ENCODE measurements at regions of chr12 and their contacts with region 1.

Region 1: DNA sequence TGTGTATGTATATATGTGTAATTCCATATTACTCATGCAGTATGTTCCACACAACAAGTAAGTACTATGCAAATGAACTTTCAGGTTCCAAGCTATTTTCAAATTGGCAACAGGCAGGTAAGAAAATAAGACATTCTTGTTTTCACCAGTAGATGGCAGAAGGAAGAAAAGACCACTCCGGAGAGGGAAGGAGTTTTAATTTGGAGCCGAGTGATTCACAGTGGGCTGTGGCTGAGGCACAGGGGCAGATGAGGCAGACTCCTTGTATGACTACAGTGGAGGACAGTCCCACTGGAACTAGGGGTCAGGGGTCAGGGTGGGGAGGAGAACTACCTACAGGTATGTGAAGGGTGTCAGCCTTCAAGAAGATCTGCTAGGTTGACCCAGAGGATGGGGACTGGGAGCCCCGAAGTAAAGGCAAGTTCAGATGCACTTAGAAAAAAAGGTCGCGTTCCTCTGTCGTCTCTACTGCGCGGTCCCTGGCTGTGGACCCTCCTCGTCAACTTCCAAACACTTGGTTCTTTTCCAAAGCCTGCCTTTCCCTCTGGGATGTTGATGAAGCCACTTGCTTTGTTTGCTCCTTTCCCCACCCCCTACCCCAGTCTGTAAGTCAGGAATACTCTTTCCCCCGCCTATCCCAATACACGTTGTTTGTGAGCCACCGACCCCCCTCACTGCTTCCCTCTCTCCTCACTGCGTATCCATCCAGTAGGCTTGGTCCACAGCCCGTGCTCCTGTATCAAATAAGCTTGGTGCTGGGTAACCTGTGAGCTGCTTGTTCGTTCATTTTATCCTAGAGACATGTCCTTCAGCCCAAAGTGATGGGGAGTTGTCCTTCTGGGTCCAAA is 24.1 kb downstream of the DDX47 start:
- DNase-seq: peak; percentile 66
- H3K4me3 ChIP-seq: no peak overlapping the region
- H3K27ac ChIP-seq: peak overlapping the region in 1 of 2 experiments; percentile 76; a peak in 1 of 4 replicates
- H3K4me1 ChIP-seq: peaks cover 0 to 39% of the 10 kb centered on the region in 2 experiments; a peak in 3 of 4 replicates
- H3K27me3 ChIP-seq: no peaks in the 10 kb centered on the region
- CTCF ChIP-seq: peak; percentile 74
- EP300 ChIP-seq: no peak
- RAD21 ChIP-seq: peak; percentile 60

Region 2: DNA sequence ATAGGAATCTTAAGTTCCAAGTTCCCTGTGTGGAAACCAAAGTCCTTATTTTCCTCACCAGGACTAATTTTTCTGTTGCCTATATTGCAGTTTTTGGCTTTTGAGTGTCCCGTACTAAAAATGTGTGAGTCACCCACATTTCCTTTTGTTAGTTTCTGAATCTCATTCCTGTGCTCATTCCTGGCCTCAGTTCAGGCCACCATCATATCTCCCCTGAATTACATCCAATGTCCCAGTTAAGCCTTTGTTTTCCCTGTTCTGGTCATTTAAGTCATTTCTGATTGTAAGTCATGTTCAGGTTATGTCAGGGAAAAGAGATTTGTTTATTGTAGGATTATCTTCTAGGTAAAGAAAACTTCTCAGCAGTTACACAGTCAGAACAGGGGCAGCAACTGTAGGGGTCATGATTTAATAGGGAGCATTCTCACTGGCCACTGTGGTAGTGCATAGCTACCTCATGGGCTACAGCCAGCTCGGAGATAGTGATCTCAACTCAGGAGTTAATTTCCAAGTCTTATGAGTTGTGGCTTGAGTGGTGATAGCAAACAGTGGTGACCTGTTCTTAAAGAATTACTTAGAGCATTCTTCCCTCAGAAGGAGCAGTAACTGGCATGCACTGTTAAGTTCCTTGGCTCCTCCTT is 17.5 kb before region 1 on chr12:
- CTCF ChIA-PET with region 1: interaction called, 19 read pairs
- POLR2A ChIA-PET with region 1: no interaction called
- DNase-seq: no peak
- H3K4me3 ChIP-seq: peak overlapping the region in 1 of 2 experiments; percentile 8; a peak in 1 of 4 replicates
- H3K27ac ChIP-seq: peak overlapping the region; percentile 81 to 88
- H3K4me1 ChIP-seq: peaks cover 8 to 35% of the 10 kb centered on the region in 2 experiments
- H3K27me3 ChIP-seq: no peaks in the 10 kb centered on the region
- CTCF ChIP-seq: no peak
- EP300 ChIP-seq: peak in 1 of 2 experiments; percentile 87; a peak in 3 of 4 replicates
- RAD21 ChIP-seq: no peak

Measured in SK-N-SH (cell line).